Activated naive CD8-positive, alpha-beta T cell treated with anti-CD3 and anti-CD28 coated beads, Interleukin-2, amount 10 ng/mL, durations not matched to agents 7 days and 5 days (primary cell): ENCODE measurements at regions of chr12 and their contacts with region 1.

Region 1: DNA sequence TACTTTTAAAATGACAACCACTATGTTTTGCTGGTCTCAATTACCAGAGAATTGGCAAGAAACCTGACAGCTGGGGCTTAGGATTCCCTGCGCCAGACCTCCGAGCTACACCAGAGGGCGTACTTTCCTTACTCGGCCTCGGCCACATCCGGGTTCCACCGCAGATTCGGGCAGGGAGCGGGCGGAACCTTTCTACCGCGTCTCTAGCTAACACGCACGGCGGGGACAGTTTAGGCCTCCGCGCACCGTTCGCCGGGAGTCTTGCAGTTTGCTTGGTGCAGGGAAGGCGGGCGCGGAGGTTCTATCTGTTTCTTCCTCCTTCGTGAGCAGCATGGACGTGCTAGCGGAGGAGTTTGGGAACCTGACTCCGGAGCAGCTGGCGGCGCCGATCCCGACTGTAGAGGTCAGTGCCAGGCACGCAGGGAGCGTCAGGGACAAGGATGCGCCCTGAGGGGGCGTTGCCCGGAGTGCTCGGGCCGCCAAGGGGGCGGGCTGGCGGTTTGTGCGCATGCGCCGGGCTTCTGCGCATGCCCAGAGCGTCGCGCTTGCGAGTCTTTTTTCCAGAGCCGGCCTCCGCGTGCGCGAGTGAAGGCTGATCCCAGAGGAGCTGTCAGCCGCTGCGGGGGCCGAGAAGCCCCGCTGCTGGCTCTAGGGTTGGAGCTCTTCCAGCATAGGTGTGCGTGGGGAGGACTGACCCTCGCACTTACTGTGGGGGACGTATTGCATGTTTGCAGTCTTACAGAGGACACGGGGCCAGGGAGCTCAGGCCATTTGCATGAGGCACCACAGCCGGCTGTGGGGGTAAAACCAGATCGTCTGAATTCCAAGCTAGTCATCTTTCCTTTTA is at the start of gene POLR3B:
- DNase-seq: peak; percentile 96
- ATAC-seq: peak; percentile 91
- H3K4me3 Mint-ChIP-seq: peak within 1 kb of the TSS; percentile 80
- H3K27ac Mint-ChIP-seq: peak within 1 kb of the TSS; percentile 80
- H3K4me1 Mint-ChIP-seq: peaks cover 12% of the 10 kb centered on the region
- H3K27me3 Mint-ChIP-seq: no peaks in the 10 kb centered on the region
- total RNA-seq, gene POLR3B: 4.7 TPM

Region 2: DNA sequence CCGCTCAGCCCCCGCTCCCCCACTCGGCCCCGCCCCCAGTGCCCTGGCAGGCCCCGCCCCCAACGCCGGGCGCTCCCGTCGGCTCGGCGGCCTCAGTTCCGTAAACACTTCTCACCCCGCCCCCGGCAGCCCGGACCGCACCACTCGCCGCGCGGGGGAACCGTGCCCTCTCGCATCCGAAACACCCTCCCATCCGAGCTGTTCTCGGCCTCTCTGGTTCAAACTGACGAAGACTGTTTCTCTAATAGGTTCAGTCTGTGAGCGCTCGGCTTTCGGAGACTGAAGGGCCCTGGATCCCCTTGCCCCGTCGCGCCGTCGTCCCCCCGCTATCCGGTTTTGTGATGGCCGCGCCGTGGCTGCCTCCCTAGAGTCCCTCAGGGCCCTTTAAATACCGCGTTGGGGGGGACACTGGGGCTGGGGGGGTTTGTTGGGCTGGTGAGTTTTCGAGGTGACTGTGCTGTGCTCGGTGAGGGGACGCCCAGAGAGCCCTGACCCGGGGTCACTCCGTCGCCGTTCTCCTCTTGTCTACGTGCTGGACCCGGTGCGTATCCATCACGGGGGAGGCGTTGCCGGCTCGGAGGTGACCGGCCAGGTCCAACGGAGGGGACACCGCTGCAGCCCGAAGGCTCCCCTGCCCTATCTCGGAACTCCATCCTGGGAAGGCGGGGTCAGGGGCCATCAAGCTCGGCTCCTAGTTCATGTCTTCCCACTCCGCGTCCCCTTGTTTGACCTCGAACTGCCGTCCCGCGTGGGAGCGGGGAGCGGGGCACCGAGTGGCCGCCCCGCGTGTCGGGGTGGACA is 55.2 kb before region 1 on chr12 and contains the start of gene TCP11L2:
- POLR2A ChIA-PET with region 1: interaction called, 23 read pairs
- DNase-seq: peak; percentile 94
- ATAC-seq: peak; percentile 75
- H3K4me3 Mint-ChIP-seq: peak within 1 kb of the TSS; percentile 97
- H3K27ac Mint-ChIP-seq: peak within 1 kb of the TSS; percentile 100
- H3K4me1 Mint-ChIP-seq: peaks cover 30% of the 10 kb centered on the region
- H3K27me3 Mint-ChIP-seq: no peaks in the 10 kb centered on the region
- total RNA-seq, gene TCP11L2: 40.9 to 50.8 TPM

Region 3: DNA sequence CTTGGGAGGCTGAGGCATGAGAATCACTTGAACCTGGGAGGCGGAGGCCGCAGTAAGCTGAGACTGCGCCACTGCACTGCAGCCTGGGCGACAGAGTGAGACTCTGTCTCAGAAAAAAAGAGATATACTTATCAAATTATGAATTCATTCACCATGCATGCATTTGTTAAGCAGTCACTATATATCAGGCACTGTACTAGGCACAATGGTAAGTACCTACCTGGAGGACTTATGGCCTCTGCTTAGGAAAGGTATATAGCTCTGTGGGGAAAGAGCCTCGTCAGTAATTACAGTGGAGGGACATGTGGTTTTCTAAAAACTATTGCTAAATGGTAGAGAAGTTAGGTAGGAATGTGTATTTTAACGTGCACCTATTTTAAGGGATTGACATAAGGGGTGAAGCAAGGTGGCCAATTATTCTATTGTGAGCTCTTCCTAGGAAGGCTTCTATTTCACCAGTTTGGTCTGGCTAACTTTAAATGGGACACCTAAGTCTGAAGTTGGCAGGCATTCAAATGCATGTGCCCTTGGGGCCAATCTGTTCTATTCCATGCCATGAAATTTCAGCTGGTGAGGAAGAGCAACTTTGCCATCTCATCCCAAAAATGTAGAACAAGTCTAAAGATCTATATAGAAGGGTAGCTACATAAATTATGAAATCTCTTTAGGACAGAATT is 40.2 kb before region 1 on chr12:
- POLR2A ChIA-PET with region 1: no interaction called
- DNase-seq: no peak
- ATAC-seq: no peak
- H3K4me3 Mint-ChIP-seq: no peak overlapping the region
- H3K27ac Mint-ChIP-seq: no peak overlapping the region
- H3K4me1 Mint-ChIP-seq: no peaks in the 10 kb centered on the region
- H3K27me3 Mint-ChIP-seq: no peaks in the 10 kb centered on the region

Region 4: DNA sequence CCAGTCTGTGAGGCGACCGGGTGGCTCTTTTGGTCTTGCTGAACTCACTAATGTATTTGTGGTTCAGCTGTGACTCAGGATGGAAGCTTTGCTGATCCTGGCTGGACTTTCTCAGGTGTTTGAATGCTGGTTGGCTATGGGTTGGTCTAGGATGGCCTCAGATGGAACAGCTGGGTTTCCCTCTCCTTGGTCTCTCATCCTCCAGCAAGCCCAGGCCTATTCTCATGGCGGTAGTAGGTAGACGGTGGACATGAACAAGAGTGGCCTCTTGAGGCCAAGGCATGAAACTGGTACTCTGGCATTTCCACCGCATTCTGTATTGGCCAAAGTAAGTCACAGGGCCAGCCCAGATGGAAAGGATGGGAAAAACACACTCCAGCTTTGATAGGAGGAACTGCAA is 12.0 kb before region 1 on chr12:
- POLR2A ChIA-PET with region 1: no interaction called
- DNase-seq: no peak
- ATAC-seq: no peak
- H3K4me3 Mint-ChIP-seq: no peak overlapping the region
- H3K27ac Mint-ChIP-seq: no peak overlapping the region
- H3K4me1 Mint-ChIP-seq: no peaks in the 10 kb centered on the region
- H3K27me3 Mint-ChIP-seq: no peaks in the 10 kb centered on the region

Region 5: GRCh38 chr12:106378788-106379187 is 21.0 kb after region 1 on chr12:
- POLR2A ChIA-PET with region 1: interaction called, 19 read pairs
- DNase-seq: no peak
- ATAC-seq: peak; percentile 22
- H3K4me3 Mint-ChIP-seq: peak overlapping the region; percentile 45
- H3K27ac Mint-ChIP-seq: no peak overlapping the region
- H3K4me1 Mint-ChIP-seq: peaks cover 11% of the 10 kb centered on the region
- H3K27me3 Mint-ChIP-seq: no peaks in the 10 kb centered on the region